ENCODE measurements at regions of chr19 and their contacts with region 1.

Region 1: DNA sequence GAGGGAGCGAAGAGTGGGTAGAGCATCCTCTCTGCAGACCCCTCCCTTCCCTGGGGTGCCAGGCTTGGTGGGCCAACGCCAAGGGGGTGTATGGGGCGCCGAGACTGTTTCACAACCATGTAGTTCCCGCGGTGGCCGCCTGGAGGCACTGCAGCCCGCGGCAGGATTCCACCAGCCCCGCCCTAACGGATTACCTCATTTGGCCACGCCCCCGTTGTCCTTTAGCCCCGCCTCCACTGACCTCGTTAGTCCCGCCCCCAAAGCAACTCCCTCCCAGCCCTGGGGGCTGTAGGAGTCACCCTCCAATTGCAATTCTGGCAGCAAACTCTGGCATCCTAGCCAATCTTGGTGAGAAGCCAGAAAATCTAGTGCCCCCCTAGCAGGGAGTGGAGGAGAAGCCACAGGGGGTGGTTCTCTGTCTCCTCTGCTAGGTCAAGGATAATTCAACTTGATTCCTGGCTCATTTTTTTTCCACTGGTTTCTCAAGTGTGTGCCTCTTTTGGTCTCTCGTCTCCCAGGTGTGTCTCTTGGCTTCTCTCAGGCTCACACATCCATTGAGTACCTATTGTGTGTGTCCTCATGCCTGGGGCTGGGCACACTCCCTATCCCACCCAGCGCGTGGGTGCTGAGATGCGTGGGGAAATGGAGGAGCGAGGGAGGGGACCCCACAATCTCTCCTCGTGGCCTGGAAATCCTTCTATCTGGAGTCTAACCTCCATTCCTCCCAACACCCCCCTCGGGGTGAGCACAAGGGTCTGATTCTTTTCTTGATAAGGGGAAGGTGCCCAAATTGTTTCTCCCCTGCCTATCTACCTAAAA is 2.0 kb downstream of the OLFM2 start:
- DNase-seq: peak; percentile 66
- ATAC-seq: peak; percentile 82
- H3K4me3 ChIP-seq: peak overlapping the region in 1 of 2 experiments; percentile 12; a peak in 1 of 4 replicates
- H3K27ac ChIP-seq: peak overlapping the region; percentile 16
- H3K4me1 ChIP-seq: peaks cover 12 to 31% of the 10 kb centered on the region in 2 experiments; a peak in 3 of 4 replicates
- H3K27me3 ChIP-seq: no peaks in the 10 kb centered on the region
- CTCF ChIP-seq: peak; percentile 86 to 95 (median 90)
- POLR2A ChIP-seq: no peak
- RAD21 ChIP-seq: peak; percentile 97

Region 2: GRCh38 chr19:9721861-9722260 is 212.5 kb before region 1 on chr19:
- CTCF ChIA-PET with region 1: no interaction called
- POLR2A ChIA-PET with region 1: no interaction called
- RAD21 ChIA-PET with region 1: no interaction called
- intact Hi-C with region 1: no loop called
- DNase-seq: no peak
- ATAC-seq: no peak
- H3K4me3 ChIP-seq: no peak overlapping the region
- H3K27ac ChIP-seq: no peak overlapping the region
- H3K4me1 ChIP-seq: no peaks in the 10 kb centered on the region
- H3K27me3 ChIP-seq: no peaks in the 10 kb centered on the region
- CTCF ChIP-seq: no peak
- POLR2A ChIP-seq: no peak
- RAD21 ChIP-seq: no peak

Region 3: GRCh38 chr19:9839415-9839814 is 94.9 kb before region 1 on chr19:
- CTCF ChIA-PET with region 1: no interaction called
- POLR2A ChIA-PET with region 1: no interaction called
- RAD21 ChIA-PET with region 1: no interaction called
- intact Hi-C with region 1: no loop called
- DNase-seq: no peak
- ATAC-seq: no peak
- H3K4me3 ChIP-seq: no peak overlapping the region
- H3K27ac ChIP-seq: no peak overlapping the region
- H3K4me1 ChIP-seq: peaks cover 4 to 18% of the 10 kb centered on the region in 2 experiments; a peak in 3 of 4 replicates
- H3K27me3 ChIP-seq: no peaks in the 10 kb centered on the region
- CTCF ChIP-seq: no peak
- POLR2A ChIP-seq: no peak
- RAD21 ChIP-seq: no peak

Region 4: DNA sequence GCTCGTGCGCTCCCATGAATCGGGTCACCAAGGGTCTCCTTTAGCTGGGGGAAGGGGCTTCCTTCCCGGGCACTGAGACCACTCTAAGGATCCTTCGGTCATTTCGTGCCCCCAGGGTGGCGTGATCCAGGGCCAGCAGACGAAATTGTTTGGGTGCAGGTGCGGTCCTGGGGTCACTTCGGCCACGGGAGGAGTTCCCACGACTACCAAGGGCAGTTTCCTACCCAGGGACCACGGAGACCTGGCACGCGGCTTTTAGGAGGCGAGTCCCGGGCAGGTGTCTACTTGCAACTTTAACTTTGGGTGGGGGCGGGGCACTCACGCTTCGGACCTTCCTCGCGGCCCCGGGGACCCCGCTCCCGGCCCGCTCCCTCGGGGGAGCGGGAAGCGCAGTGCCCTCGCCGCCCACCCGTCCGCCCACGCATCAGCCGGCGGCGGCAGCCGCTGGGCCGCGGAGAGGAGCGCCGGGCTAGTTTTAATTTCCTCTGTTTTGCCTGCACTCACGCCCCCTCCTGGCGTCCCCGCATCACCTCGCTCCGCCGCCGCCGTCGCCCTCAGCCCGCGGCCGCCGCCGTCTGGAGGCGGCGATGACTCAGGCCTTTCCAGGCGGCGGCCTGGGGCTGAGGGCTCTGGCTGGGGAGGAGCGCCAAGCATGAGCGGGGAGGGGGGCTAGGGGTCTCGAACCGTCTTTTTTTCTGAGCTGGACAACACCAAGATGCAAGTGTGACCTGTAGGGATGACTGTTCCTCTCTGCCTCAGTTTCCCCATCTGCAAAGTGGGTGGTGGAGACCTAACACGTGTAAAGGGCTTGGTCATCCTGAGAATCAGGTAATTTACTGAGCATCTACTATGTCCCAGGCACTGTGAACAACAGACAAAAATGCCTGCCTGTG is 19.8 kb before region 1 on chr19:
- CTCF ChIA-PET with region 1: no interaction called
- POLR2A ChIA-PET with region 1: no interaction called
- RAD21 ChIA-PET with region 1: no interaction called
- intact Hi-C with region 1: no loop called
- DNase-seq: peak; percentile 53
- ATAC-seq: peak; percentile 87
- H3K4me3 ChIP-seq: peak overlapping the region; percentile 50 to 58
- H3K27ac ChIP-seq: peak overlapping the region; percentile 69
- H3K4me1 ChIP-seq: peaks cover 8 to 20% of the 10 kb centered on the region in 2 experiments; a peak in 3 of 4 replicates
- H3K27me3 ChIP-seq: no peaks in the 10 kb centered on the region
- CTCF ChIP-seq: peak; percentile 57 to 86 (median 63)
- POLR2A ChIP-seq: no peak
- RAD21 ChIP-seq: peak; percentile 67

Region 5: GRCh38 chr19:10000171-10000826 is 66.0 kb after region 1 on chr19:
- CTCF ChIA-PET with region 1: interaction called, 13 read pairs
- POLR2A ChIA-PET with region 1: no interaction called
- RAD21 ChIA-PET with region 1: interaction called in 1 of 2 experiments, 5 read pairs
- intact Hi-C with region 1: loop called (anchors 1 kb)
- DNase-seq: peak; percentile 62
- ATAC-seq: peak; percentile 79
- H3K4me3 ChIP-seq: no peak overlapping the region
- H3K27ac ChIP-seq: no peak overlapping the region
- H3K4me1 ChIP-seq: peaks cover 0 to 15% of the 10 kb centered on the region in 2 experiments; a peak in 3 of 4 replicates
- H3K27me3 ChIP-seq: no peaks in the 10 kb centered on the region
- CTCF ChIP-seq: peak; percentile 84 to 95 (median 91)
- POLR2A ChIP-seq: no peak
- RAD21 ChIP-seq: peak; percentile 80

Region 6: DNA sequence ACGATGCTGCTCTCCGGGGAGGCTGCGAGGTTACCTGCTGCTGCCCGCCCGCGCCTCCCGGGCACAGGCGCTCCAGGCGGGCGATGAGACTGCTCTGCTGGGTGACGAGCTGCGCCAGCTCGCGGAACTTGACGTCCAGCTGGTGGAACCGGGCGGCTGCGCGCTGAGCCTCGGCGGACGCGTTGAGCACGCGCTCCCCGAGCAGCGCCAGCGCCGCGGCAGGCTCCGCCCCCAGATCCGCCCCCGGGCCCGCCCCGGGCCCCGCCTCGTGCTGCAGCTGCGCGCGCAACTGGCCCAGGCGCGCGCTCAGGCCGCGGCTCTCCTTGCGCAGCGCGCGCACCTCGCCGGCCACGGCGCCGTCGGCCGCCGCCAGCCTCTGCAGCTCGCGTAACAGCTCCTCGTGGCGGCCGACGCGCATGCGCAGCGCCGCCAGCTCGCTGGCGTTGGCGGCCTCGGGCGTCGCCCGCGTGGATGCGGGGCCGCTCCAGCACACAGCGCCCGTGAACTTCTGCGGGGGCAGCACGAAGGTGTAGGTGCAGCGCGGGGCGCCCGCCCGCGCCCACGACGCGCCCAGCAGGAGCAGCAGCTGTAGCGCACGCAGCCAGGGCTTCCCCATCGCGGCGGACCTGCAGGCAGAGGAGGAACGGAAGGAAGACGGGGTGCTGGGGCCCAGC is 161.7 kb after region 1 on chr19:
- CTCF ChIA-PET with region 1: interaction called, 6 read pairs
- POLR2A ChIA-PET with region 1: no interaction called
- RAD21 ChIA-PET with region 1: interaction called in 1 of 2 experiments, 4 read pairs
- intact Hi-C with region 1: loop called (anchors 5 kb)
- DNase-seq: peak; percentile 75
- ATAC-seq: peak; percentile 89
- H3K4me3 ChIP-seq: no peak overlapping the region
- H3K27ac ChIP-seq: peak overlapping the region; percentile 44; the same call in 1 of the 2 replicates
- H3K4me1 ChIP-seq: peaks cover 11 to 16% of the 10 kb centered on the region in 2 experiments
- H3K27me3 ChIP-seq: no peaks in the 10 kb centered on the region
- CTCF ChIP-seq: no peak
- POLR2A ChIP-seq: peak; percentile 66
- RAD21 ChIP-seq: no peak

Region 7: DNA sequence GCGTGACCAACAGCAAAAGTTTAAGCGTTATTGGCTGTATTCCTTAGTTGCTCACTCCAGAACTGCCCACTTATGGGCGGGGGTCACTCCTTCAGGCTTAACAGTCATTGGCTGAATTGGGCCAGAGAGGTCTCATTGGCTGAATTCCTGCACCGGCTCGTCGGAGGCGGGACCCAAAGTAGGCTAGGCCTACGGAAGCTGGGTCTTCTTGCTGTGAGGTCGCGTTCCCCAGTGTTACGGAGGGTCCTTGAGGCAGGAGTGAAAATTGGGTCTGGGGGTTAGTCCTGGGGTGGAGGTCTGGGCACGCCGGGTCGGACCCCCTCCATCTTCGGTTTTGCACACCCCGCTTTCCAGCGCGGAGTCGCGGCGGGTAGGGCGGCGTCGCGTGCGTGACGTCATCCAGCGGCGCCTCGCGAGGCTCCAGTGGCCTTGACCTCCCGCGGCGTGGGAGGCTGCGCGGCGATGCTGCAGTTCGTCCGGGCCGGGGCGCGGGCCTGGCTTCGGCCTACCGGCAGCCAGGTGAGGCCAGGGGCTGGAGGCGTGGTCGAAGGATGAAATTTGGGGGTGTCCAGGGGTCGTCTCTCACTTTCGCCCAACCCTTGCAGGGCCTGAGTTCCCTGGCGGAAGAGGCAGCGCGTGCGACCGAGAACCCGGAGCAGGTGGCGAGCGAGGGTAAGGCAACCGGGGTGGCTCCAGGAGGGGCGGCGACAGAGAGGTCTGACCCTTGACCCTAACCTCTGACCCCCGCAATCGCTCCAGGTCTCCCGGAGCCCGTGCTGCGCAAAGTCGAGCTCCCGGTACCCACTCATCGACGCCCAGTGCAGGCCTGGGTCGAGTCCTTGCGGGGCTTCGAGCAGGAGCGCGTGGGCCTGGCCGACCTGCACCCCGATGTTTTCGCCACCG is 317.7 kb after region 1 on chr19 and contains the start of gene MRPL4:
- CTCF ChIA-PET with region 1: interaction called, 6 read pairs
- POLR2A ChIA-PET with region 1: no interaction called
- RAD21 ChIA-PET with region 1: interaction called in 1 of 2 experiments, 3 read pairs
- intact Hi-C with region 1: loop called (anchors 1 kb)
- DNase-seq: peak; percentile 97
- ATAC-seq: peak; percentile 94
- H3K4me3 ChIP-seq: peak within 1 kb of the TSS; percentile 98 to 99
- H3K27ac ChIP-seq: peak within 1 kb of the TSS; percentile 82
- H3K4me1 ChIP-seq: peaks cover 7 to 32% of the 10 kb centered on the region in 2 experiments; a peak in 3 of 4 replicates
- H3K27me3 ChIP-seq: no peaks in the 10 kb centered on the region
- CTCF ChIP-seq: no peak
- POLR2A ChIP-seq: no peak
- RAD21 ChIP-seq: no peak
- total RNA-seq, gene MRPL4: 146 TPM

Region 8: GRCh38 chr19:10388957-10389356 is 454.6 kb after region 1 on chr19:
- CTCF ChIA-PET with region 1: interaction called, 6 read pairs
- POLR2A ChIA-PET with region 1: no interaction called
- RAD21 ChIA-PET with region 1: no interaction called
- intact Hi-C with region 1: loop called (anchors 1 kb)
- DNase-seq: peak; percentile 77
- ATAC-seq: peak; percentile 67
- H3K4me3 ChIP-seq: no peak overlapping the region
- H3K27ac ChIP-seq: no peak overlapping the region
- H3K4me1 ChIP-seq: 0 out of 4 replicates have a peak, but pooled peaks cover 0 to 3% of the 10 kb centered on the region in 2 experiments
- H3K27me3 ChIP-seq: no peaks in the 10 kb centered on the region
- CTCF ChIP-seq: peak; percentile 92 to 97 (median 97)
- POLR2A ChIP-seq: no peak
- RAD21 ChIP-seq: peak; percentile 95